ENCODE measurements at regions of chr20 and their contacts with region 1.

Region 1: DNA sequence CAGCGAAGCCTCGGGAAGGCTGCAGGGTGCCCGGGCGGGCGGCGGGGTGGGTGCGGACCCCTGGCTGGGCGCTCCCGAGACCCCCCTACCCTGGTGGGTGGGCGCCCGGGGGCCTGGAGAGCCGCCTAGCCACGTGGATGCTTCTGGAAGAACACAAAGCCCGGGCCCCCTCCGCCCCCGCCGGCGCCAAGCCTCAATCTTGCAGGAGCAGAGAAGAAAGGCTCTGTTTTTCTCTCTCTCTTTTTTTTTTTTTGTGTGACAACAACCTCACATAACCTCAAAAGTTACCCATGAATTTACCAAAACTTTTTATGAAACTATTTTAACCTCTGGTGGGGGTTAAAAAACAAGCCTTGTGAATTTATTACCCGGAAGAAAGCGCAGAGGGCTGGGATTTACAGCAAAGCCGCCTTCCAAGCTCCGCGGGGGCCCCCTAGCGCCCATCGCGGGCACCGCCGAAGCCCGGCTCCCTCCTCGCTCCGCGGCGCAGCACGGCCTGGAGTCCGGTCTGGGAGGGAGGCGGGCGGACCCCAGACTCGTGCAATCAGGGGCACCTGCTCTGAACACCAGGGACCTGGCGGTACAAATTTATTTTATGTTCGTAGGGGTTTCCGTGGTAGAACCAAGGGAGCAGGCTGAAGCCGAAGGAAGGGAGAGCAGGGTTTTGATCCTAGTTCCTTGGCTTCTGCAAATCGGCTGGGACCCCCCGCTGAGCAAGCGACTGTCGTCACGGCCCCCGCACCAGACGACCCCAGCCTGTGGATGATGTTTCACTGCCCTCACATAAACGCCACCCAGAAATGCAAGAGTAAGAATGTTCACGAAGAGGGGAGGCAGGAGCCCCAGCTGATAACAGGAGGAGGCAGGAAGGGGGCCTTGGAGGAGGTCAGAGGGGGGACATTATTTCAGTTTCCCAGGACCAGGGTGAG is 58.9 kb downstream of the ZNF831 start:
- DNase-seq: peak; percentile 77
- ATAC-seq: peak; percentile 92 to 99
- H3K4me3 ChIP-seq: peak overlapping the region; percentile 51
- H3K27ac ChIP-seq: peak overlapping the region; percentile 81 to 91
- H3K4me1 ChIP-seq: peaks cover 6% of the 10 kb centered on the region; the same call in 2 of the 3 replicates
- CTCF ChIP-seq: peak; percentile 90
- EP300 ChIP-seq: no peak
- POLR2A ChIP-seq: no peak
- RAD21 ChIP-seq: peak; percentile 80 to 92

Region 2: GRCh38 chr20:59207742-59208357 is 14.7 kb before region 1 on chr20:
- CTCF ChIA-PET with region 1: interaction called, 18 read pairs
- POLR2A ChIA-PET with region 1: interaction called, 3 read pairs
- DNase-seq: peak; percentile 28 to 29
- ATAC-seq: peak in 1 of 2 experiments; percentile 72; a peak in 3 of 6 replicates
- H3K4me3 ChIP-seq: no peak overlapping the region
- H3K27ac ChIP-seq: no peak overlapping the region
- H3K4me1 ChIP-seq: no peaks in the 10 kb centered on the region
- CTCF ChIP-seq: 0 out of 3 replicates have a peak, but pooled peaks have one; percentile 8
- EP300 ChIP-seq: no peak
- POLR2A ChIP-seq: no peak
- RAD21 ChIP-seq: peak; percentile 16 to 42; a peak in 1 of 5 replicates

Region 3: DNA sequence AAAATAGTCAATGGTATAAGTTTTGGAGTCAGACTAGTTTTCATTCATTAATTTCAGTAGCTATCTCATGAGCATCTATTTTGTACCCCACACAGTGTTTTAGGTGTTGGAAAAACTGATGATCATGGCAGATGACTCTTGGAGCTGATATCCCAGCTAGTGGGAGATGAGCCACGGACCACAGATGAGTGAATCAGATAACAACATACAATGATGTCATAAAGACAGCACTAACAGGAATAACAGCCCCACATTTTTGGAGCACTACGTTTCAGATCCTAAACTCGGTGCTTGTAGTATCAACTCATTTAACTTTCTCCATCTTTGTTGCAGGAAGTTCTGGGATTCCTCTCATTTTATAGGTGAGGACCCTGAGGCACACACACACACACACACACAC is 10.1 kb after region 1 on chr20:
- CTCF ChIA-PET with region 1: interaction called, 21 read pairs
- POLR2A ChIA-PET with region 1: no interaction called
- DNase-seq: no peak
- ATAC-seq: no peak
- H3K4me3 ChIP-seq: no peak overlapping the region
- H3K27ac ChIP-seq: no peak overlapping the region
- H3K4me1 ChIP-seq: no peaks in the 10 kb centered on the region
- CTCF ChIP-seq: no peak
- EP300 ChIP-seq: no peak
- POLR2A ChIP-seq: no peak
- RAD21 ChIP-seq: no peak

Region 4: GRCh38 chr20:59547596-59547995 is 325.1 kb after region 1 on chr20:
- CTCF ChIA-PET with region 1: no interaction called
- POLR2A ChIA-PET with region 1: no interaction called
- DNase-seq: no peak
- ATAC-seq: no peak
- H3K4me3 ChIP-seq: no peak overlapping the region
- H3K27ac ChIP-seq: no peak overlapping the region
- H3K4me1 ChIP-seq: no peaks in the 10 kb centered on the region
- CTCF ChIP-seq: no peak
- EP300 ChIP-seq: no peak
- POLR2A ChIP-seq: no peak
- RAD21 ChIP-seq: no peak

Measured in A549 (cell line).